ENCODE measurements at regions of chr13 and their contacts with region 1.

Region 1: DNA sequence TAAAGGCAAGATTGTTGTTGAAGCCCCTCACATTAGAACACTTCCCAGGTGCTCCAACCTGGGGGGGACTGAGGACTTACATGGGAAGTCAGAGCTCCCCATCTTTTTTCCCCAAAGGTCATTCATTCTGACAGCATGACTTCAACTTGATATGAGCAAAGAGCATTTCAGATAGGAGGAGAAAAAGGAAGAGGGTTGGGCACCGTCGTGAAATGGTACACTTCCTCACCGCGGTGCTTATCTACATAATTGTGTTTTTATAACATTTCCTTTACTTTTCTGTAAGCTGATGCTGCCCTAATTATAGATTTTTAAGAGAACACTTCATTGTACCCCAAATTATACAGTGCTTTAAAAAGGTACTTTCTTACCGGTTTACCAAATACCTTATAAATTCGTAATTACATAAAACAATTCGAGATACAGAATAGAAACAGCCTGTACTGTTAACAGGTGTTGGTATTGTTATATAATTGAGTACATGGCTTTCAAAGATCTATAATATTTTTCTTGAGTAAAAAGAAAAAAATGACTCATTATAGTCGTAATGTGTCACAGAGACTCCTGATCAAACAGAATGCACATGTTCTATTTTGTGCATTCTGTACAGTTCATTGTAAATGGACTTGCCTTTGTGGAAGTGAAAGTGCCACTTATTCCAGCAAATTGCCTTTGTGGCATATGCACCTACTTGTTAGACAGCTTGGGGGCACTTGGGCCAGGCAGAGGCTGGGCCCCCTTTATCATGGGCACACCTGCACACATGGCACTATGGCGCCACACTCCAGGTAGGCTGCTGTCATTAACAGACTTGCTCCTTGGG is 81.8 kb downstream of the GGACT start:
- DNase-seq: peak; percentile 18
- H3K4me3 Mint-ChIP-seq: peak overlapping the region; percentile 36
- H3K27ac Mint-ChIP-seq: no peak overlapping the region
- H3K4me1 Mint-ChIP-seq: peaks cover 24% of the 10 kb centered on the region
- H3K27me3 Mint-ChIP-seq: peaks cover 27% of the 10 kb centered on the region

Region 2: DNA sequence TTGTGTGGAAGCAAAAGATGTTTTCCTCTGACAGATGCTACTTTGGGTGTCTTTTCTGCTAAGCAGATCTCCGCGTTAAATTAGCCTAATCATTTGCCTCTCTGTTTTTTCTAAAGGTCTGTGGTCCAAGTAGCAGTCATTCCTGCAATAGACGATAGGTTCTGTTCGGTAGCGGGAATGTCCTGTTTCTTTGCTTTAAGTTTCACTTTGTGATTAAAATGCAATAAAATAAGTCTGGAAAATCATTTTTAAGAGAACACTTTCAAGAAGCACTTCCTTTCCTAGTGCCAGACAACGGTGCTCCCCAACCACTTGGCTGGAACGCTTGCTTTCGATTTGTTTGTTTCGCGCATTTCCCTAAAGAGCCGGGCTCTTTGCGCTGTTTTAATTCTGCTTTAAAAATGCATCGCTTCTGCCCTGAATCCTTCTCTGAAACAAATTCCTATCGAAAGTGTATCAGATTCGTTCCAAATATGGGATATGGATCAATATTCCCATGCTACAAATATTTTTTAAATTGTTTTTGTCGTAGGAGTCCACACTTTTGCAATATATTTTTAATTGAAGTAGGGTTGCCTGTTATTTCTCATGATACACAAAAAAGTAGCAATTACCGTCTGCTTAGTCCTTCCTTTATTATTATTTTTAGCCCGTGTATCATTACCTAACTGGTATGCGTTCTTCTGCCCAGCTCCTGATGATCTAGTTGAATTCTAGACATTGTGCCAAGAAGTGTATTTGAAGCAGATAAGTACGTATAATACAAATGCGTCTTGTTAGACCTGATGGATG is 511.0 kb before region 1 on chr13:
- CTCF ChIA-PET with region 1: no interaction called
- POLR2A ChIA-PET with region 1: no interaction called
- intact Hi-C with region 1: loop called (anchors 2 kb)
- DNase-seq: no peak
- H3K4me3 Mint-ChIP-seq: no peak overlapping the region
- H3K27ac Mint-ChIP-seq: peak overlapping the region; percentile 36
- H3K4me1 Mint-ChIP-seq: peaks cover under 1% of the 10 kb centered on the region
- H3K27me3 Mint-ChIP-seq: peaks cover 73% of the 10 kb centered on the region

Region 3: GRCh38 chr13:100129605-100130004 is 377.2 kb before region 1 on chr13:
- CTCF ChIA-PET with region 1: no interaction called
- POLR2A ChIA-PET with region 1: no interaction called
- intact Hi-C with region 1: loop called (anchors 1 kb)
- DNase-seq: no peak
- H3K4me3 Mint-ChIP-seq: no peak overlapping the region
- H3K27ac Mint-ChIP-seq: no peak overlapping the region
- H3K4me1 Mint-ChIP-seq: peaks cover 22% of the 10 kb centered on the region
- H3K27me3 Mint-ChIP-seq: no peaks in the 10 kb centered on the region

Region 4: DNA sequence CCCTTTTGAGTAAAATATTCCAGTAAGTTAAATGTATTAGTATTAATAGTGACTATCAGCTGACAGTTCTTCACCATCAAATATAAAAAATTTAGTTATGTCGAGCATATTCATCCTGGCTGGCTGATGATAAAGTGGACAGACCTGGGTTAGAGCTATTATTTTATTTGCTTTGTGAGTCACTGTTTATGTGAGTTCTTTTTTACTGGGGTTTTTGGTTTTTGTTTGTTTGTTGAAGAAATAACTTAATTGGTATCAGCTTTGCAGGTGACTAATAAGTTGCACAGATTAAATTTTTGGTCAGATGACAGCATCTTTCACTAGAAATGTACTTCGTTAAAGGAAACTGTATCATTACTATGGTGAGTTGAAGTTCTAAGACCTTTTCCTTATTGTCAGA is 142.9 kb before region 1 on chr13:
- CTCF ChIA-PET with region 1: no interaction called
- POLR2A ChIA-PET with region 1: no interaction called
- intact Hi-C with region 1: loop called (anchors 1 kb)
- DNase-seq: no peak
- H3K4me3 Mint-ChIP-seq: no peak overlapping the region
- H3K27ac Mint-ChIP-seq: no peak overlapping the region
- H3K4me1 Mint-ChIP-seq: peaks cover 6% of the 10 kb centered on the region
- H3K27me3 Mint-ChIP-seq: no peaks in the 10 kb centered on the region

Region 5: DNA sequence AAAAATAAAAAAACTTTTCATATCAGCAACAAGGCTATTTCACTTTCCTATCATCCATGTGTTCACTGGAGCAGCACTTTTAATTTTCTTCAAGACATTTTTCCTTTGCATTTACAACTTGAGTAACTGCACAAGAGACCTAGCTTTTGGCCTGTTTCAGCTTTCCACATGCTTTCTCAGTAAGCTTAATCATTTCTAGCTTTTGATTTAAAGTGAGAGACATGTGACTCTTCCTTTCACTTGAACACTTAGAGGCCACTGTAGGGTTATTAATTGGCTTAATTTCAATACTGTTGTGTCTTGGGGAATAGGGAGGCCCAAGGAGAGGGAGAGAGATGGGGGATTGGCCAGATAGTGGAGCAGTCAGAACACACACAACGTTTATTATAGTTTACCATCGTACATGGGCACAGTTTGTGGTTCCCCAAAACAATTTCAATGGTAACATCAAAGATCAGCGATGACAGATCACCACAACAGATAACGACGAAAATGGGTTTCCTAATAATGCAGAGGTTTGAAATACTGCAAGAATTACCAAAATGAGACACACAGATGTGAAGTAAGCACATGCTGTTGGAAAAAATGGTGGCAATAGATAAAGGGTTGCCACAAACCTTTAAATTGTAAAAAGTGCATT is 35.8 kb before region 1 on chr13:
- CTCF ChIA-PET with region 1: no interaction called
- POLR2A ChIA-PET with region 1: no interaction called
- intact Hi-C with region 1: loop called (anchors 2 kb)
- DNase-seq: no peak
- H3K4me3 Mint-ChIP-seq: no peak overlapping the region
- H3K27ac Mint-ChIP-seq: no peak overlapping the region
- H3K4me1 Mint-ChIP-seq: peaks cover 20% of the 10 kb centered on the region
- H3K27me3 Mint-ChIP-seq: no peaks in the 10 kb centered on the region

Measured in activated CD4-positive, alpha-beta memory T cell treated with anti-CD3 and anti-CD28 coated beads for 36 hours (primary cell).